Activated CD4-positive, alpha-beta memory T cell treated with anti-CD3 and anti-CD28 coated beads for 36 hours (primary cell): ENCODE measurements at regions of chr6 and their contacts with region 1.

Region 1: GRCh38 chr6:70884074-70884983 is 72.5 kb downstream of the B3GAT2 start:
- DNase-seq: peak; percentile 64
- H3K4me3 Mint-ChIP-seq: no peak overlapping the region
- H3K27ac Mint-ChIP-seq: no peak overlapping the region
- H3K4me1 Mint-ChIP-seq: no peaks in the 10 kb centered on the region
- H3K27me3 Mint-ChIP-seq: peaks cover 13% of the 10 kb centered on the region

Region 2: DNA sequence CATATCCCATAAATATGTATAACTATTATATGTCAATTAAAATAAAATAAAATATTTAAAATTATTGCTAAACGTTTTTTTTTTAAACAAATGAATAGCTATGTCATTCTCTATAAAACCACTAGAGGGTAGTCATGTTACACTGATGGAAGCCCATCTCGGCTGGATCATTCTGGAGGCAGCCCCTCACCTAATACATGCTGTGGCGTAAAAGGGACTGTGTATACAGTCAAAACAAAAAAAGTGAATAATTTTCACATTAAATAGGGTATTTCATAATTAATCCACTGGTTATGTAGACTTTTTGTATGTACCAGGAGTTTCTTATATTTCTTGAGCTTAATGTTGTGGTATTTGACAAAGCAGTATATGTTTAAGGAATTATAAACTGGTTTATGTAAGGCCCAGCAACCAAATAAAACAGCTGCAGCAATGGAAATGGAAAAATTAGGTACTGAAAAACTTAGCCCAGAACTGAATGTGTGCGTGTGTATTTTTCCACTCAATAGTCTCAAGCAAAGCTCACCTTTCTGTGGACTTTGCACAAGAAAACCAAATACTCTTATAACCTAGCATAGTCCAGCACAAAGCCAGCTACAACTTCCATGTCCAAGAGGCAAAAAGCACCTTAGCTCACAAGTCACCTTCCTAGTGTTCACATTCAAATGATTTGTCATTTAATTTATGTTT is 663.2 kb before region 1 on chr6:
- CTCF ChIA-PET with region 1: interaction called, 7 read pairs
- POLR2A ChIA-PET with region 1: no interaction called
- intact Hi-C with region 1: loop called (anchors 5 kb)
- DNase-seq: no peak
- H3K4me3 Mint-ChIP-seq: no peak overlapping the region
- H3K27ac Mint-ChIP-seq: no peak overlapping the region
- H3K4me1 Mint-ChIP-seq: peaks cover 2% of the 10 kb centered on the region
- H3K27me3 Mint-ChIP-seq: peaks cover 9% of the 10 kb centered on the region

Region 3: DNA sequence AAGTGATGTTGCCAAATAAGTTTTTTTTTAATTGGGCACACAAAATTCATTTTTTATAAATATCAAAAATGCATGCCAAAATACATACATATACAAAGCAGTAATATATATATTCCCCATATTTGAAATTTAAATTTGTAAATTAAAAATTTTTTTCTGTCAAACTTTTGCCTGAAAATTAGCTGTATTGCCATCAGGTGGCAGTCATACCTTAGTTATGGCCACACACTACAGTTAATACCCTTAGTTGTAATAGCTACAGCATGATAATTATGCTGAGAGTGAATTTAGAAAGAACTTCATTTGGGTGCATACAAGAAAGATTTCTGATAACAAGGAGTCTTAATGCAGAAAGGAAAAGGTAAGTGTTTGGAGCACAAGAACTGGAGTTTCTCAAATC is 363.8 kb before region 1 on chr6:
- CTCF ChIA-PET with region 1: interaction called, 20 read pairs
- POLR2A ChIA-PET with region 1: no interaction called
- intact Hi-C with region 1: loop called (anchors 1 kb)
- DNase-seq: no peak
- H3K4me3 Mint-ChIP-seq: no peak overlapping the region
- H3K27ac Mint-ChIP-seq: no peak overlapping the region
- H3K4me1 Mint-ChIP-seq: peaks cover 6% of the 10 kb centered on the region
- H3K27me3 Mint-ChIP-seq: no peaks in the 10 kb centered on the region

Region 4: GRCh38 chr6:70706491-70707123 is 177.7 kb before region 1 on chr6:
- CTCF ChIA-PET with region 1: interaction called, 152 read pairs
- POLR2A ChIA-PET with region 1: no interaction called
- intact Hi-C with region 1: loop called (anchors 1 kb)
- DNase-seq: no peak
- H3K4me3 Mint-ChIP-seq: no peak overlapping the region
- H3K27ac Mint-ChIP-seq: no peak overlapping the region
- H3K4me1 Mint-ChIP-seq: peaks cover 47% of the 10 kb centered on the region
- H3K27me3 Mint-ChIP-seq: no peaks in the 10 kb centered on the region

Region 5: DNA sequence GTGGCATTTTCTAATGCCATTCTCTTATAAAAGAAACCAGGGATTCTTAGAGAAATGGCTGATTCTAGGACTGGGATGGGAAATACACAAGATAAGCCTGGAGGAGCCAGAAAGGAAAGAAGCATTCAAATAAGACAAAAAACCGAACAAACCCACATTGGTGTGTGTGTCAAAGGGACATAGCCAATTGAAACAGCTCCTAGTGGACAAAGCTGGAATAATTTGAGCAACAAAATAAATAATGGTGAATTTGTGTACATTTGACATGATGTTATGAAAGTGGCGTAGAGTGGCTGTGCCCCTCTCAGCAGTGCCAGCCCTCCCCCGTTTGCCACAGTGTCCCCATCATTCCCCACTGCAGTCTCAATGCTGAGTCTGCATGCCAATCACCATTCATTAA is 17.0 kb after region 1 on chr6:
- CTCF ChIA-PET with region 1: interaction called, 13 read pairs
- POLR2A ChIA-PET with region 1: no interaction called
- intact Hi-C with region 1: no loop called
- DNase-seq: no peak
- H3K4me3 Mint-ChIP-seq: no peak overlapping the region
- H3K27ac Mint-ChIP-seq: no peak overlapping the region
- H3K4me1 Mint-ChIP-seq: no peaks in the 10 kb centered on the region
- H3K27me3 Mint-ChIP-seq: peaks cover 2% of the 10 kb centered on the region

Region 6: GRCh38 chr6:70980725-70981124 is 96.4 kb after region 1 on chr6:
- CTCF ChIA-PET with region 1: no interaction called
- POLR2A ChIA-PET with region 1: no interaction called
- intact Hi-C with region 1: no loop called
- DNase-seq: no peak
- H3K4me3 Mint-ChIP-seq: no peak overlapping the region
- H3K27ac Mint-ChIP-seq: no peak overlapping the region
- H3K4me1 Mint-ChIP-seq: no peaks in the 10 kb centered on the region
- H3K27me3 Mint-ChIP-seq: peaks cover 11% of the 10 kb centered on the region

Region 7: DNA sequence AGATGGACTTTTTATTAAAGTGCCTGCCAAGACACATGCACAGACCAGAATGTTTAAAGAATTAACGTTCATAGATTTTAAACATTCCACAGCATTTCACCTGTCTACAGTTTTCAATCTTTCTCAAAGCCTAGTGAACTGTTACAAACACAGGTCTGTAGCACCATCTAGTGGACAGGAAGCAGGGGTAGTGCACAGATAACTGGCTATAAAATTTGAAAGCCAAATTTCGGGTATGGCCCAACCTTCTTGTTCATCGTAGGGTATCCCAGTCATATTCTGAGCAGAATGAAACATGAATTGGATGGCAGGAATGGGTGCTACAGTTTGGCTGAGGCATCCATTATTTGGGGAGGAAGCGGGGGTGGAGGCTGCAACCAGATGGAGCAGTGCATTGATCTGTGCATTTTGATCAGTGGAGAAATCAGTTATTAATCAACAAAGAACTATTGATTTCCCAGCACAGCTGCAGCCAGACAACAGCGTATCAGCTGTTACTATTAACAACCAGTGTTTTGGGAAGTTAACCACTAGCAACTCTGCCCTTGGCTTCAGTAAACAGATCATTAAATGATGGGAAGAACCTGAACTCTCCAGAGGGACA is 128.6 kb after region 1 on chr6:
- CTCF ChIA-PET with region 1: interaction called, 11 read pairs
- POLR2A ChIA-PET with region 1: no interaction called
- intact Hi-C with region 1: loop called (anchors 2 kb)
- DNase-seq: no peak
- H3K4me3 Mint-ChIP-seq: no peak overlapping the region
- H3K27ac Mint-ChIP-seq: no peak overlapping the region
- H3K4me1 Mint-ChIP-seq: no peaks in the 10 kb centered on the region
- H3K27me3 Mint-ChIP-seq: peaks cover 18% of the 10 kb centered on the region

Region 8: DNA sequence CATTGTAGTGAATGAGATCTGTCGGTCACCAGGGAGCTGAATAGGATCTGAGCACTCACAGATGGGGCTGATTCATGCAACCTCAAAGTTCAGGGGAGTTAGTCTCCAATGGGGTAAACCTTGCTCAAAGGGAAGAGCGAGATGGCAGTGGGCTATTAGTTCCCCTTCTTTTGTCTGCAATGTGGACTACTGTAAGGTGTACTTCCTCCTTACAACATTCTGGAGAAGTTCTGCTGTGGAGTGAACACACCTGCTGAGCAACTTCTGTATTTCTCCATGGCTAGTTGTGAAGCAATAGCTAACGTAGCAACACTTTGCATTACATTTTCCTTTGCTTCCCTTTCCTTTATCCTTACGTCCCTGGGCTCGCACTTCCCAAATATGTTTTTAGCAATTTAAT is 206.8 kb after region 1 on chr6:
- CTCF ChIA-PET with region 1: no interaction called
- POLR2A ChIA-PET with region 1: no interaction called
- intact Hi-C with region 1: no loop called
- DNase-seq: no peak
- H3K4me3 Mint-ChIP-seq: no peak overlapping the region
- H3K27ac Mint-ChIP-seq: no peak overlapping the region
- H3K4me1 Mint-ChIP-seq: no peaks in the 10 kb centered on the region
- H3K27me3 Mint-ChIP-seq: no peaks in the 10 kb centered on the region